ENCODE measurements at regions of chr20 and their contacts with region 1.

Region 1: GRCh38 chr20:58481481-58482021 is 33.6 kb downstream of the APCDD1L start:
- DNase-seq: peak; percentile 67
- H3K4me3 ChIP-seq: peak overlapping the region; percentile 6
- H3K27ac ChIP-seq: no peak overlapping the region
- H3K4me1 ChIP-seq: no peaks in the 10 kb centered on the region
- H3K27me3 ChIP-seq: no peaks in the 10 kb centered on the region
- CTCF ChIP-seq: peak; percentile 71

Region 2: DNA sequence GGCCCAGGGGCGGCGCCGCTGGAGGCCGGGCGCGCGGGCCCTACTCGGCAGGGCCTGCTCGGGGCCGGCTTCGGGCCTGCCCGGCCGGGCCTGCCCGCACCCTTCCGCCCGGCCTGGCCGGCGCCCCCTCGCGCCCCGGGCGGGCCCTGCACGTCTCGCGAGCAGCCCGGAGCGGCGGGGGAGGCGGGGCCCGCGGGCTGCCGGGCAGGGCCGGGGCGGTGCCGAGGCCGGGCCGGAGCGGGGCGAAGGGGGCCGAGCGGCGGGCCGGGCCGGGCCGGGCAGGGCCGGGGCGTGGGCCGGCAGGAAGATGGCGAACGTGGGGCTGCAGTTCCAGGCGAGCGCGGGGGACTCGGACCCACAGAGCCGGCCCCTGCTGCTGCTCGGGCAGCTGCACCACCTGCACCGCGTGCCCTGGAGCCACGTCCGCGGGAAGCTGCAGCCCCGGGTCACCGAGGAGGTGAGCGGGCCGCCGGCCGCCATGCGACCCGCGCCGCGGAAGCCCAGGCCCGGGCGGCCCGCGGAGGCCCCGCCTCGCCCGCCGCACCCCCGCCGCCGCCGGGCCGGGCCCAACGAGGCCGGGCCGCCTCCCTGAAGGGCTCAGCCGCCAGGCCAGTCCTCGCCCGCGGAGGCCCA is 211.2 kb after region 1 on chr20 and contains the start of gene NPEPL1:
- intact Hi-C with region 1: loop called (anchors 10 kb)
- DNase-seq: peak; percentile 65
- H3K4me3 ChIP-seq: peak within 1 kb of the TSS; percentile 44
- H3K27ac ChIP-seq: peak within 1 kb of the TSS; percentile 67
- H3K4me1 ChIP-seq: peaks cover 8% of the 10 kb centered on the region
- H3K27me3 ChIP-seq: no peaks in the 10 kb centered on the region
- CTCF ChIP-seq: no peak
- total RNA-seq, gene NPEPL1: 14.7 to 20.6 TPM

Region 3: GRCh38 chr20:58850693-58851174 is 369.2 kb after region 1 on chr20 and contains the start of gene GNAS-AS1:
- intact Hi-C with region 1: loop called (anchors 10 kb)
- DNase-seq: peak; percentile 84
- H3K4me3 ChIP-seq: peak within 1 kb of the TSS; percentile 38
- H3K27ac ChIP-seq: no peak within 1 kb of the TSS
- H3K4me1 ChIP-seq: no peaks in the 10 kb centered on the region
- H3K27me3 ChIP-seq: peaks cover 35% of the 10 kb centered on the region
- CTCF ChIP-seq: no peak
- total RNA-seq, gene GNAS-AS1: 0.88 to 1.7 TPM

Measured in colonic mucosa (tissue), 4 donors.